ENCODE measurements at regions of chr7 and their contacts with region 1.

Region 1: GRCh38 chr7:55348499-55348898 is 16.6 kb upstream of the LANCL2 start:
- DNase-seq: no peak
- H3K4me3 Mint-ChIP-seq: no peak overlapping the region
- H3K27ac Mint-ChIP-seq: no peak overlapping the region
- H3K4me1 Mint-ChIP-seq: peaks cover 17% of the 10 kb centered on the region
- H3K27me3 Mint-ChIP-seq: peaks cover 32% of the 10 kb centered on the region

Region 2: DNA sequence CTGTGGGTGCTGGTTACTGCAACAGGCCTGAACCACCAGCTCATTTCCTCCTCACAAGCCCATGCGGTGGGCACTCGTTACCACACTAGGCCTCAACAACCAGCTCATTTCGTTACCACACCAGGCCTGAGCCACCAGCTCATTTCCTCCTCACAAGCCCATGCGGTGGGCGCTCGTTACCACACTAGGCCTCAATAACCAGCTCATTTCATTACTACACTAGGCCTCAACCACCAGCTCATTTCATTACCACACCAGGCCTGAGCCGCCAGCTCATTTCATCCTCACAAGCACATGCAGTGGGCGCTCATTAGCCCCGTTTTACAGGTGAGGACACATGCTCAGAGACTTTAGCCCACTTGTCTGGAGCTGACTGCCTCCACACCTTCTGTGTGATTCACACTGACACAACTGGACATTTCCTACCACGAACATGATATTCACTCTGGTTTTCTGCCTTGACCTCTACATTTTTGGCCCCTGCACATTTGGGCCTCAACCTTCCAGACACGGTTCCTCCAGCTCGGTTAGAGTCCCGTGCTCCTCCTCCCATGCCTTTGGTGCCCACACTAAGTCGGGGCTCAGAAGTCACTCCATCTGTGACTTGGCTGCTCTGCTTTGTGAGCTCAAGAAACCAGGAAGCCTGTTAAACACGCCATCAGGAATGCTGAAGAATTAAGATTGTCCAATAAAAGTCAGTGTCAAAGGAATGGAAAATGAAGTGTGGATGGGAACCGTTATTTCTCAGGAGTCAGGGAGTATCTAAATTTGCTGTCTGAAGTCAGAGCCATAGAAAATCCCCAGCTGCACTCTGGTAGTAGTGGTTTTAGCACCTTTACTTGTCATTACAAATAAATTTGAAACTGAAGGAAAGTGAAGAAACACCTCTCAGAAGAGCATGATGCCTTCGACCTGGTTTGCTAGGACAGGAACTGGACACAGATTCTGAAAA is 39.2 kb before region 1 on chr7:
- intact Hi-C with region 1: loop called (anchors 1 kb)
- DNase-seq: peak; percentile 60
- H3K4me3 Mint-ChIP-seq: no peak overlapping the region
- H3K27ac Mint-ChIP-seq: peak overlapping the region; percentile 60
- H3K4me1 Mint-ChIP-seq: peaks cover 31% of the 10 kb centered on the region
- H3K27me3 Mint-ChIP-seq: peaks cover 11% of the 10 kb centered on the region

Region 3: DNA sequence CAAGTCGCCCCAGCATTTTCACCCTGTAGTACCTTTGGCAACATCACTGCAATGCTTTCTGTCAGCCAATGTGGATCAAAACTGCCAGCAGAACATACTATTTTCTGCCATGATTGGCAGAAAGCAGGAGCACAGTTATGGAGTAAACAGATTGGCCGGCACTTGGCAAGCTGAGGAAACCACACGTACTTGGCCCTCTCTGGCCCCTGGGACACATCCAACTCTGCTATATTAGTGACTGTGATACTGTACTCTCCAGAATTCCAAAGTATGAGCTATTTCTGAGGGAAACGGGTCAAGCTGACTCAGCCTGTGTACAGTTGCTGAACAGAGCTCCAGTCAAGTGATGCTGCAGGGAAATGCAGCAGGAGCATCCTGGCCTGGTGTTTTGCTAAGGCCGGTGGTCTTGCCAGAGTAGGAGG is 23.1 kb before region 1 on chr7:
- intact Hi-C with region 1: no loop called
- DNase-seq: no peak
- H3K4me3 Mint-ChIP-seq: no peak overlapping the region
- H3K27ac Mint-ChIP-seq: no peak overlapping the region
- H3K4me1 Mint-ChIP-seq: no peaks in the 10 kb centered on the region
- H3K27me3 Mint-ChIP-seq: peaks cover 6% of the 10 kb centered on the region

Region 4: DNA sequence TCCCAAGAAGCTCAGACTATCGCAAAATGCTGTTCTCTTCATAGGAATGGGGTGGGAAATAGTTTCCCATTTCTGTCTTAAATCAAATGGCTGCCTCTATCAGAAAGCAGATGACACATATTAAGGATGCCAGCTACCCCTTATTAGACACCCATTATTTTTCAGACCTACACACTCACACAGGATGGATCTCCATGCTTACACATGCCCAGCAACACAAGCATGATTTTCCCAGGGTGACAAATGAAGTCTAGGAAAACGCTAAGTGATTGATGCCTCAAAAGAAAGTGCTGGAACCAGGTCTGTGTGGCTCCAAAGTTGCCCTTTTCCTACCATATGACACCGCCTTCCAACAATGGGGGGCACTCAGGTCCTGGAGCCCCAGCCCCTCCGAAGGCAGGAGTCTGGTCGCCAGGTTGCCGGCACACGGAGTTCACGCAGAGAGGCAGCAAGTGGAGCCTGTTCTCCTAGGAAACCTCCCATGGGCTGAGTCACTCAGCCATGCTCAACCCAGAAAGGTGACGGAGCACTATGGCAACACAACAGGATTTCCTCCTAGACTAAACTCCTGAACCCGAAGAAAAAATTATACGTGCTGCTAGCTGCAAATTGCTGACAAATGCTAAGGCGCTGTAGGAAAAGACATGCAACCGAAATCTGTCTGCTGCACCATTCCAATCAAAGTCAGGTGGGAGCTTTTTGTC is 204.0 kb after region 1 on chr7:
- intact Hi-C with region 1: no loop called
- DNase-seq: no peak
- H3K4me3 Mint-ChIP-seq: no peak overlapping the region
- H3K27ac Mint-ChIP-seq: no peak overlapping the region
- H3K4me1 Mint-ChIP-seq: peaks cover 54% of the 10 kb centered on the region
- H3K27me3 Mint-ChIP-seq: no peaks in the 10 kb centered on the region

Measured in activated T-helper 2 cell treated with anti-CD3 and anti-CD28 coated beads, Interferon-gamma antibody, Interleukin-2, Interleukin-4, amounts not matched to agents 10 μg/mL and 5 μg/mL and 100 μg/mL, durations not matched to agents 14 hours and 24 hours and 36 hours (primary cell).